ENCODE measurements at regions of chr13 and their contacts with region 1.

Region 1: GRCh38 chr13:27442071-27442647 is 8.2 kb downstream of the MTIF3 start:
- DNase-seq: peak in 6 of 9 donors; percentile 36 to 56 (median 43)
- ATAC-seq: peak; percentile 67
- H3K4me3 ChIP-seq: peak overlapping the region; percentile 27
- H3K4me3 Mint-ChIP-seq: peak overlapping the region; percentile 64 to 83 (median 76)
- H3K27ac ChIP-seq: peak overlapping the region; percentile 53
- H3K27ac Mint-ChIP-seq: peak overlapping the region; percentile 47 to 97 (median 90)
- H3K4me1 ChIP-seq: peaks cover 41 to 54% of the 10 kb centered on the region in 2 donors
- H3K4me1 Mint-ChIP-seq: peaks cover 46 to 84% (median 77%) of the 10 kb centered on the region in 7 donors
- H3K27me3 ChIP-seq: no peaks in the 10 kb centered on the region
- H3K27me3 Mint-ChIP-seq: no peaks in the 10 kb centered on the region

Region 2: DNA sequence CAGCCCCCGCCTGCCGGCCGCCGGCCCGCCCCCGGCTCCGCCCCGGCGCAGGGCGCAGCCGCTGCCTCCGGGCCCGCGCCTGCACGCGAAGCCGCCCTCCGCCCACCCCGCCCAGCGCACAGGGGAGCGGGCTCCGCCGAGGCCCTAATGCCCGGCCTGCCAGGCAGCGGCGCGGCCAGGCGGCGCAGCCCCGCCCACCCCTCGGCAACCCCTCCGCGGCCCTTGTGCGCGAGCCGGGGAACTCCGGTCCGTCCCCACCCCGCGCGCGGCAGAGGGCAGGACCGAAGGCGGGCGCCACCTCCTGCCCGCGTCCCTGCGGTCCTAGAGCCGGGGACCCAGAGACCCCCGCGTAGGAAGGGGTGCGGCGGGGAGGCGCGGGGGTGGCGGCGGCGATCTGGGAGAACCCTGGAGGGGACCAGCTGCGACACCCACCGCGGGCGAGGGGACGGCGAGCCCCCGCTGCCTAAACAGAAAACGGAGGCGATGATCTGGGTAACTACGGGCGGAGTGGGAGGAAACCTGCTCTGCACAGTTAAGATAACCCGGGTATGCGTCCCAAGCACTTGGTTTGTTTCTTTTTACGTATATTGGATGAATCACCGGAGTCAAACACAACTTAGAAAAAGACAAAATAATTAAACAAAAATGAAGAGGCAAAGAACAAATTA is 270.2 kb before region 1 on chr13:
- CTCF ChIA-PET with region 1: no interaction called
- POLR2A ChIA-PET with region 1: no interaction called
- intact Hi-C with region 1: no loop called
- DNase-seq: peak; percentile 82 to 91 (median 88)
- ATAC-seq: peak; percentile 94
- H3K4me3 ChIP-seq: peak overlapping the region; percentile 58
- H3K4me3 Mint-ChIP-seq: peak overlapping the region; percentile 78 to 96 (median 88)
- H3K27ac ChIP-seq: peak overlapping the region; percentile 85
- H3K27ac Mint-ChIP-seq: peak overlapping the region; percentile 76 to 95 (median 88)
- H3K4me1 ChIP-seq: peaks cover 24 to 34% of the 10 kb centered on the region in 2 donors
- H3K4me1 Mint-ChIP-seq: peaks cover 23 to 49% (median 44%) of the 10 kb centered on the region in 7 donors
- H3K27me3 ChIP-seq: no peaks in the 10 kb centered on the region
- H3K27me3 Mint-ChIP-seq: no peaks in the 10 kb centered on the region

Region 3: GRCh38 chr13:27424246-27425157 is 17.7 kb before region 1 on chr13 and contains the start of gene GTF3A:
- CTCF ChIA-PET with region 1: interaction called, 22 read pairs
- POLR2A ChIA-PET with region 1: interaction called, 477 read pairs
- intact Hi-C with region 1: loop called in 1 of 2 experiments (anchors 2 kb)
- DNase-seq: peak; percentile 83 to 97 (median 93)
- ATAC-seq: peak; percentile 77
- H3K4me3 ChIP-seq: peak within 1 kb of the TSS; percentile 71
- H3K4me3 Mint-ChIP-seq: peak within 1 kb of the TSS; percentile 81 to 96 (median 92)
- H3K27ac ChIP-seq: peak within 1 kb of the TSS; percentile 86
- H3K27ac Mint-ChIP-seq: peak within 1 kb of the TSS; percentile 88 to 98 (median 95)
- H3K4me1 ChIP-seq: peaks cover 24 to 45% of the 10 kb centered on the region in 2 donors
- H3K4me1 Mint-ChIP-seq: peaks cover 27 to 47% (median 42%) of the 10 kb centered on the region in 7 donors
- H3K27me3 ChIP-seq: no peaks in the 10 kb centered on the region
- H3K27me3 Mint-ChIP-seq: no peaks in the 10 kb centered on the region
- total RNA-seq, gene GTF3A: 123 to 254 (median 206) TPM

Region 4: DNA sequence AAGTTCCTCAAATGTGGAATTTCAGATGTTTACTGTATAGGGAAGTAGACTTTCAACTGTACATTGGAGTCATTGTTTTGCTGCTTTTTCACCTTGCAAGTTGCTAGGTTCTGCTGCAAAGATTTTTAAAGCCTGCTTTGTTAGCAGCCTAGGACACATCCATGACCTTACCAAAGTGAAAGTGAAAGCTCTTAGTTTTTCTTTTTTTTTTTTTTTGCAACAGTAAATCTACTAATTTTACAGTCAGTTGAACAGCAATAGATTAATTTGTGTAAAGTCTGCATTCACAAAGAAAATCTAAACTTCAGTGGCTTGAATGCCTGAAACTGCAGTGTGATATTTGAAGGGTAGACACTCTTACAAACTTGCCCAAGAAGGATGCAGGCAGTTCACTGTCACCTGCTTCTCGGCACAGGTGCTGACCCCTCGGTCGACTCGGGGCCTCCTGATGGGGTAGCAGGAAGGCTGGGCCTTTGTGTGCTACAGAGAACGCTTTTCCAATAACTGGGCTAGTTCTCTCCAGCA is 13.2 kb after region 1 on chr13:
- CTCF ChIA-PET with region 1: interaction called, 3 read pairs
- POLR2A ChIA-PET with region 1: interaction called, 21 read pairs
- intact Hi-C with region 1: no loop called
- DNase-seq: peak in 5 of 9 donors; percentile 29 to 41 (median 37)
- ATAC-seq: no peak
- H3K4me3 ChIP-seq: peak overlapping the region; percentile 53
- H3K4me3 Mint-ChIP-seq: peak overlapping the region; percentile 83 to 98 (median 94)
- H3K27ac ChIP-seq: peak overlapping the region; percentile 72
- H3K27ac Mint-ChIP-seq: peak overlapping the region; percentile 92 to 99 (median 98)
- H3K4me1 ChIP-seq: peaks cover 11 to 15% of the 10 kb centered on the region in 2 donors
- H3K4me1 Mint-ChIP-seq: peaks cover 15 to 47% (median 31%) of the 10 kb centered on the region in 7 donors
- H3K27me3 ChIP-seq: no peaks in the 10 kb centered on the region
- H3K27me3 Mint-ChIP-seq: no peaks in the 10 kb centered on the region